ENCODE measurements at regions of chr11 and their contacts with region 1.

Region 1: DNA sequence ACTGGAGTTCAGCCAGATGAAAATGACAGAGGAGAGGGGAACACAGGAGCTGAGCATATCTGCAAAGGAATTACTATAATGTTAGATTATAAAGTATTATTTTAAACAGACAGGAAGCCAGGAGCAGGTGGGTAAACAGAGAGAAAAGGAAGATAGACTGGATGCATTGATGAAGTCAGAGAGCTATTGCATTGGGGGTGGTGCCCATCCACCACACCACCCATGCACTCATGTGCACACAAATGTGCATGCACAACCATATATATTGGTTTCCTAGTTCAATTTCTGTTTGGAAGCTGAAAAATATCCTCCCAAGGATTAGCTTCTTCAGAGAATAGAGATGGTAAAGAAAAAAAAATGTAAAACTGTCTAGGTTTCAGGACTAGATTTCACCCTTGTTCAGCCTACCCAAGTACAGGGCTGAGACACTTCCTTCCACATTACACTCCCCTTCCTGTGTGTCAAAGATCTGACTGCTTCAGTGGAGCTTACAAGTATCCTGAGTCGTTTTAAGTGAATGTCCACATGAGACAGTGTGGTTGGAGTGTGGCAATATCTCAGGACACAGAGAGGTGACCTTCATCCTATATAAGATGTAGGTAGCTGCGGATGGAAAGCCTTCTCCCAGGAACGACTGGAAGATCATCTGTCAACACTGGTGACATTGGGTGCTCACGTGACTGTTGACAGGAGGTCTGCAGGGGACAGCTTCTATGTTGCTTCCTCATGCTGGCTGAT is 12.2 kb upstream of the SMPD1 start:
- DNase-seq: no peak
- H3K4me3 Mint-ChIP-seq: no peak overlapping the region
- H3K27ac Mint-ChIP-seq: no peak overlapping the region
- H3K4me1 Mint-ChIP-seq: no peaks in the 10 kb centered on the region
- H3K27me3 Mint-ChIP-seq: peaks cover 12% of the 10 kb centered on the region
- CTCF ChIP-seq: no peak

Region 2: DNA sequence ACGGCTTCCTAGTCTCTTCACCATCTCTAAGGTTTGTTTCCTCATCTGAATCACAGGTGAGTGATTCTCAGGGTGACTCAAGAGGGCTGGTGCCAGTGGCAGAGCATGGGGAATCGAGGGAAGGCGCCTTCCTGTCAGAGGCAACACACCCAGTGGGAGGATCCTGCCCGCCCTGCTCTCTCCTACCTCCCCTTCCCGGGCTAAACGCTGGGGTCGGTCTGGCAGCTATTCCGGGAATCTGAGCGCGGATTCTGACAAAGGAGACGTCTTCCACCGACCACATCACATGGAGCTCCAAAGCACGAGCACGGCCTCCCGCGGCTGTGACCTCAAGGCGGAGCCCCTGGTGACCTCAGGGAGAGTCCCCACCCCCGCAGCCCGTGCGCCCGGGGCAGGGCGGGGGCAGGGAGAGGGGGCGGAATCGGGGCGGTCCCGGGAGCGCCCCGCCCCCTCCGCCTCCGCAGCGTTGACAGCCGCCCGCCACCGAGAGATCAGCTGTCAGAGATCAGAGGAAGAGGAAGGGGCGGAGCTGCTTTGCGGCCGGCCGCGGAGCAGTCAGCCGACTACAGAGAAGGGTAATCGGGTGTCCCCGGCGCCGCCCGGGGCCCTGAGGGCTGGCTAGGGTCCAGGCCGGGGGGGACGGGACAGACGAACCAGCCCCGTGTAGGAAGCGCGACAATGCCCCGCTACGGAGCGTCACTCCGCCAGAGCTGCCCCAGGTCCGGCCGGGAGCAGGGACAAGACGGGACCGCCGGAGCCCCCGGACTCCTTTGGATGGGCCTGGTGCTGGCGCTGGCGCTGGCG is 12.1 kb after region 1 on chr11 and contains the start of gene SMPD1:
- CTCF ChIA-PET with region 1: interaction called, 50 read pairs
- POLR2A ChIA-PET with region 1: interaction called, 13 read pairs
- intact Hi-C with region 1: no loop called
- DNase-seq: peak; percentile 91
- H3K4me3 Mint-ChIP-seq: peak within 1 kb of the TSS; percentile 94
- H3K27ac Mint-ChIP-seq: peak within 1 kb of the TSS; percentile 96
- H3K4me1 Mint-ChIP-seq: peaks cover 29% of the 10 kb centered on the region
- H3K27me3 Mint-ChIP-seq: no peaks in the 10 kb centered on the region
- CTCF ChIP-seq: no peak
- total RNA-seq, gene SMPD1: 15.0 and 32.2 TPM in 2 replicates

Region 3: DNA sequence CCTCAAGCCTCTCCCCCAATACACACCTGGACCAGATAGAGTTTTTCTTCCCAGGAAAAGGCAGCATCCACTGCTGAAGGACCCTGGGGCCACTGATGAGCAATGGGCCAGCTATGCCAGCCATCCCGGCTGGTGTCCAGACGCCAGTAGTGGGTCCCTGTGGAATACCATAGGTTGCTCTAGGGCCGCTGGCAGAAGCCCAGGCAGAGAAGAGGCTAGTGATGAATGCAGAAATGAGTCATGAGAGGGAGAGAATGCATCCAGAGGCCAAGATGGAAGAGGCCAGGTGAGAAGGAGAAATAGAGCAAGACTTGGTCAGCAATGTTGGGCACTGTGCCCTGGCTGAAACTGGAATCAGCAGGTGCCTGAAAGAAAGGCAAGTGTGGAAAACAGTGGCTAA is 53.8 kb after region 1 on chr11:
- CTCF ChIA-PET with region 1: interaction called, 469 read pairs
- POLR2A ChIA-PET with region 1: no interaction called
- intact Hi-C with region 1: no loop called
- DNase-seq: peak; percentile 98
- H3K4me3 Mint-ChIP-seq: no peak overlapping the region
- H3K27ac Mint-ChIP-seq: no peak overlapping the region
- H3K4me1 Mint-ChIP-seq: peaks cover 12% of the 10 kb centered on the region
- H3K27me3 Mint-ChIP-seq: no peaks in the 10 kb centered on the region
- CTCF ChIP-seq: no peak

Region 4: DNA sequence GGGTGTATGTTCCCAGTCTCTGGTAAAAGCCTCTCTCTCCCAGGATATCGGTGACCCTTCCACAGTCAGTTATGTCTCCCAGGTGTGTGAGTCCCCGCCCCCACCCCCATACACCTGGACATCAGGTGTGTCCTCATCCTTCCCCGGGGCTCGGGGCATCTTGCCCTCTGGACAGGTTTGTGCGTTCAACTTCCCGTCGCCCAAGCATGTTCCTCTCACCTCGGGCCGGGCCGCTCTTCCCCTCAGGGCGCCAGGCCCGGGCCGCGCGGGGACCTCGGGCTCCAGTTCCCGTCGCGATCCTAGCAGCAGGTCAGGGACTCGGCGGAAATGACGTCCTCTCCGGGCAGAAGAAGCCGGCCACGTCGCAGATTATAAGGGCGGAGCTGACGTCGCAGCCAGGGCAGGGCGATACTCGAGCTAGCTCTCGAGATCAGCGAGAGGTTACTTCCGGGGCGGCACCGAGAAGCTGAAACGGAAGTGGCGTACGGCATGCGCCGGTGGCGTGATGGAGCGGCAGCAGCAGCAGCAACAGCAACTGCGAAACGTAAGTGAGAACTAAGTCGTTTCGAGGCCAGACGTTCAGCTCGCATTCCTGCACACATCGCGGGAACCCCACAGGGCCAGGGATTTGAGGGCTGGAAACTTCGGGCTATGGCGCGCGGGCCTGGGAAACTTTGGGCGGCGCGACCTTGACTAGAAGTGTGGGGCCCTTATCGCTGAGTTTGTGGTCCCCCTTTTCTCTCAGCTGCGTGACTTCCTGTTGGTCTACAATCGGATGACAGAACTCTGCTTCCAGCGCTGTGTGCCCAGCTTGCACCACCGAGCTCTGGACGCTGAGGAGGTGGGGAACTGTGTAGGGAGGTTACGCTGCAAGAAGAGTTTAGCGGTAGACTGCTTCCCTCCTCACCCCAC is 103.2 kb after region 1 on chr11 and contains the starts of genes ARFIP2 and TIMM10B:
- CTCF ChIA-PET with region 1: interaction called, 23 read pairs
- POLR2A ChIA-PET with region 1: interaction called, 8 read pairs
- intact Hi-C with region 1: no loop called
- DNase-seq: peak; percentile 96
- H3K4me3 Mint-ChIP-seq: peak within 1 kb of the TSS; percentile 93
- H3K27ac Mint-ChIP-seq: peak within 1 kb of the TSS; percentile 99
- H3K4me1 Mint-ChIP-seq: peaks cover 17% of the 10 kb centered on the region
- H3K27me3 Mint-ChIP-seq: no peaks in the 10 kb centered on the region
- CTCF ChIP-seq: no peak
- total RNA-seq, gene ARFIP2: 76.3 and 96.0 TPM in 2 replicates
- total RNA-seq, gene TIMM10B: 36.2 and 42.1 TPM in 2 replicates

Region 5: GRCh38 chr11:6523253-6523652 is 145.2 kb after region 1 on chr11:
- CTCF ChIA-PET with region 1: interaction called, 21 read pairs
- POLR2A ChIA-PET with region 1: no interaction called
- intact Hi-C with region 1: no loop called
- DNase-seq: no peak
- H3K4me3 Mint-ChIP-seq: no peak overlapping the region
- H3K27ac Mint-ChIP-seq: peak overlapping the region; percentile 69
- H3K4me1 Mint-ChIP-seq: peaks cover 6% of the 10 kb centered on the region
- H3K27me3 Mint-ChIP-seq: no peaks in the 10 kb centered on the region
- CTCF ChIP-seq: no peak

Region 6: DNA sequence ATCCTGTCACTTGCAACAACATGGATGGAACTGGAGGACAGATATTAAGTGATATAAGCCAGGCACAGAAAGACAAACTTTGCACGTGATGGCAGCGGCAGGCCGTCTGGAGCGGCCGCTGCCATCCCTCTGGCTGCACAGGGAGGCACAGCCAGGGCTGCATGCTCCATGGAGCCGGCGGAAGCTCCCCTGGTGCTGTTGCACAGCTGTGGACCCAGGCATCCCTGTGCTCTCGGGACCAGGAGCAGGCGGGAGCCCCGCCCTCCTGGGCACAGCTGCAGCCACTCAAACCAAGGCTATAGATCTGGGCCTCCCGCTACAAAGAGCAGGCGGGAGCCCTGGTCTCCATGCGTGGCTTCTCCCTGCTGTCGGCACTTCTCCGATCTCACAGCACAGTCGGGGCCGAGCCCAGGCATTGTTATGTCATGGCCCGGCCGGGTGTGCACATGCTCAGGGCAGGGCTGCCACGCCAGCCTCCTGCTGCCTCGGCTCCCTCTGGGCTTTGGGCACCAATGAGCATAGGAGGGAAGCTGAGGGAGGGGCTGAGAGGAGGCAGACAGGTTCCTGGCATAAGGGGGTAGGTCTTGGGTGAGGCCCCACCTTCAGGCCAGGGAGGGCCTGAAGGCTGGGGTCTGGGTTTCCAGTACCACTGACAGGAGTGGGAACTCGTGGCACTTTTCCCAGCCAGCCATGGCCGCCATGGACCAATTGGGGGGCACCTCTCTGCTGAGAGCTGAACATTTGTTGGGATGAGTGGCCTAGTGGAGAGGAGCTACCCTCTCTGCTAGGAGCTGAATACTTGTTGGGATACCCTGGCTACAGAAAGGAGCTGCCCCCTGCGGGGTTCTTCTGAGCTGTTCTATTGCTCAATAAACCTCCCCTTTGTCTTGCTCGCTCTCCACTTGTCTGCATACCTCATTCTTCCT is 208.6 kb after region 1 on chr11:
- CTCF ChIA-PET with region 1: no interaction called
- POLR2A ChIA-PET with region 1: no interaction called
- intact Hi-C with region 1: no loop called
- DNase-seq: no peak
- H3K4me3 Mint-ChIP-seq: no peak overlapping the region
- H3K27ac Mint-ChIP-seq: no peak overlapping the region
- H3K4me1 Mint-ChIP-seq: no peaks in the 10 kb centered on the region
- H3K27me3 Mint-ChIP-seq: no peaks in the 10 kb centered on the region
- CTCF ChIP-seq: no peak

Region 7: GRCh38 chr11:6705905-6706535 is 327.9 kb after region 1 on chr11:
- CTCF ChIA-PET with region 1: interaction called, 17 read pairs
- POLR2A ChIA-PET with region 1: no interaction called
- intact Hi-C with region 1: loop called (anchors 5 kb)
- DNase-seq: peak; percentile 65
- H3K4me3 Mint-ChIP-seq: no peak overlapping the region
- H3K27ac Mint-ChIP-seq: no peak overlapping the region
- H3K4me1 Mint-ChIP-seq: no peaks in the 10 kb centered on the region
- H3K27me3 Mint-ChIP-seq: no peaks in the 10 kb centered on the region
- CTCF ChIP-seq: peak; percentile 82